CD4-positive, alpha-beta T cell (primary cell): ENCODE measurements at regions of chr6 and their contacts with region 1.

Region 1: GRCh38 chr6:41159415-41160082 is 3.4 kb downstream of the TREM2 start:
- DNase-seq: no peak
- ATAC-seq: no peak
- H3K4me3 ChIP-seq: no peak overlapping the region
- H3K4me3 Mint-ChIP-seq: no peak overlapping the region
- H3K27ac ChIP-seq: no peak overlapping the region
- H3K27ac Mint-ChIP-seq: no peak overlapping the region
- H3K4me1 ChIP-seq: no peaks in the 10 kb centered on the region
- H3K4me1 Mint-ChIP-seq: no peaks in the 10 kb centered on the region
- H3K27me3 ChIP-seq: peaks cover 0 to 2% of the 10 kb centered on the region in 2 experiments
- H3K27me3 Mint-ChIP-seq: peaks cover 13% of the 10 kb centered on the region
- CTCF ChIP-seq: no peak

Region 2: GRCh38 chr6:41119508-41119907 is 40.0 kb before region 1 on chr6:
- CTCF ChIA-PET with region 1: no interaction called
- POLR2A ChIA-PET with region 1: no interaction called
- intact Hi-C with region 1: loop called in 1 of 2 experiments (anchors 5 kb)
- DNase-seq: no peak
- ATAC-seq: no peak
- H3K4me3 ChIP-seq: no peak overlapping the region
- H3K4me3 Mint-ChIP-seq: no peak overlapping the region
- H3K27ac ChIP-seq: no peak overlapping the region
- H3K27ac Mint-ChIP-seq: no peak overlapping the region
- H3K4me1 ChIP-seq: no peaks in the 10 kb centered on the region
- H3K4me1 Mint-ChIP-seq: no peaks in the 10 kb centered on the region
- H3K27me3 ChIP-seq: no peaks in the 10 kb centered on the region
- H3K27me3 Mint-ChIP-seq: no peaks in the 10 kb centered on the region
- CTCF ChIP-seq: no peak